ENCODE measurements at regions of chr6 and their contacts with region 1.

Region 1: GRCh38 chr6:113182370-113183141 is 674.6 kb upstream of the MARCKS start:
- DNase-seq: no peak
- H3K4me3 ChIP-seq: no peak overlapping the region
- H3K4me3 Mint-ChIP-seq: no peak overlapping the region
- H3K27ac Mint-ChIP-seq: no peak overlapping the region
- H3K4me1 ChIP-seq: 0 out of 2 replicates have a peak, but pooled peaks cover under 1% of the 10 kb centered on the region
- H3K4me1 Mint-ChIP-seq: no peaks in the 10 kb centered on the region
- H3K27me3 ChIP-seq: no peaks in the 10 kb centered on the region
- H3K27me3 Mint-ChIP-seq: no peaks in the 10 kb centered on the region
- CTCF ChIP-seq: no peak

Region 2: GRCh38 chr6:113488812-113489685 is 306.5 kb after region 1 on chr6:
- CTCF ChIA-PET with region 1: no interaction called
- POLR2A ChIA-PET with region 1: no interaction called
- intact Hi-C with region 1: loop called (anchors 10 kb)
- DNase-seq: no peak
- H3K4me3 ChIP-seq: no peak overlapping the region
- H3K4me3 Mint-ChIP-seq: no peak overlapping the region
- H3K27ac Mint-ChIP-seq: no peak overlapping the region
- H3K4me1 ChIP-seq: no peaks in the 10 kb centered on the region
- H3K4me1 Mint-ChIP-seq: no peaks in the 10 kb centered on the region
- H3K27me3 ChIP-seq: no peaks in the 10 kb centered on the region
- H3K27me3 Mint-ChIP-seq: no peaks in the 10 kb centered on the region
- CTCF ChIP-seq: no peak

Measured in Caco-2 (cell line).